ENCODE measurements at regions of chr12 and their contacts with region 1.

Region 1: GRCh38 chr12:107109741-107110719 is 16.7 kb upstream of the CRY1 start:
- DNase-seq: no peak
- CTCF ChIP-seq: no peak

Region 2: GRCh38 chr12:106378788-106379187 is 731.2 kb before region 1 on chr12:
- CTCF ChIA-PET with region 1: interaction called, 11 read pairs
- POLR2A ChIA-PET with region 1: no interaction called
- DNase-seq: no peak
- CTCF ChIP-seq: no peak

Region 3: GRCh38 chr12:107093417-107094182 is 16.4 kb before region 1 on chr12 and contains the start of gene CRY1:
- CTCF ChIA-PET with region 1: interaction called, 19 read pairs
- POLR2A ChIA-PET with region 1: no interaction called
- DNase-seq: peak; percentile 90
- CTCF ChIP-seq: no peak

Region 4: GRCh38 chr12:107152315-107152714 is 42.3 kb after region 1 on chr12:
- CTCF ChIA-PET with region 1: no interaction called
- POLR2A ChIA-PET with region 1: no interaction called
- DNase-seq: no peak
- CTCF ChIP-seq: no peak

Region 5: GRCh38 chr12:107533218-107533617 is 423.2 kb after region 1 on chr12:
- CTCF ChIA-PET with region 1: no interaction called
- POLR2A ChIA-PET with region 1: no interaction called
- DNase-seq: no peak
- CTCF ChIP-seq: no peak

Measured in GM10248 (cell line).